ENCODE measurements at regions of chr16 and their contacts with region 1.

Region 1: DNA sequence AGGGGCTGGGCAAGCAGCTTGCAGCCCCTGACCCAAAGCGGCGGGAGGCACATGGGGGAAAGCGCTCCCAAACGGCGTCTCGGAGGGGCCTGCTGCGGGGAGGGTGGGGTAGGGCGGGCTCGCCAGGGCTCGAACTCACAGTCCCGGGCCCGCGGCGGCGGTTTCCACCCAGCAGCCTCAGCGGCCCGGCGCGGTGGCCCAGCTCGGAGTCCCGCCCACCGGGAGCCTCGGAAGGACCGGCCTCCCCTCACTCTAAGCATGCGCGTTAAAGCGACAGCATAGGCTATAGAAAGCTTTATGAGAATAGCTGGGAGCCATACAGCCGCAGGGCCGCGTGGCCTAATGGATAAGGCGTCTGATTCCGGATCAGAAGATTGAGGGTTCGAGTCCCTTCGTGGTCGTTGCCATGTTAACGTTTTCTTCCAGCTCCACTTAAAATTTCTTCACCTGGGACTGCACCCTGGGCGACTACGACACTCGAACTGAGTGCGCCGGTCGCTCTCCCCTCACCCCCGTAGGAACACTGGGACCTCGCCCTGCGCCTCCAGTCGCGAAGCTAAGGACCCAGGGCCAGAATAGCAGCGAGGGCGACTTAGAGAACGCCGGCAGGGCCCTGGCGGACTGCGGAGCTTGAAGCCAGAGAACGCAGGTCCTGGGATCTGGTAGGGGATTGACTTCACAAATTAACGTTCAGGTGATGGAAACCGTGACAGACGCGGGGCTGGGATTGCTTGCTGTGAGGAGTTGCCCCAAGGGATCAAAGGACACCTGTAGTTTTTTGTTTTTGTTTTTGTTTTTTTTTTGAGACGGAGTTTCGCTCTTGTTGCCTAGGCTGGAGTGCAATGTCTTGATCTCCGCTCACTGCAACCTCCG is 15.8 kb downstream of the ZNF213 start:
- DNase-seq: peak; percentile 98
- H3K4me3 Mint-ChIP-seq: peak overlapping the region; percentile 83
- H3K27ac Mint-ChIP-seq: peak overlapping the region; percentile 87
- H3K4me1 Mint-ChIP-seq: peaks cover 10% of the 10 kb centered on the region
- H3K27me3 Mint-ChIP-seq: no peaks in the 10 kb centered on the region
- CTCF ChIP-seq: no peak

Region 2: GRCh38 chr16:2682209-2683021 is 468.2 kb before region 1 on chr16 and contains the start of gene KCTD5:
- CTCF ChIA-PET with region 1: no interaction called
- POLR2A ChIA-PET with region 1: no interaction called
- intact Hi-C with region 1: no loop called
- DNase-seq: peak; percentile 94
- H3K4me3 Mint-ChIP-seq: peak within 1 kb of the TSS; percentile 96
- H3K27ac Mint-ChIP-seq: peak within 1 kb of the TSS; percentile 97
- H3K4me1 Mint-ChIP-seq: no peaks in the 10 kb centered on the region
- H3K27me3 Mint-ChIP-seq: no peaks in the 10 kb centered on the region
- CTCF ChIP-seq: no peak
- total RNA-seq, gene KCTD5: 49.4 and 51.6 TPM in 2 replicates

Region 3: GRCh38 chr16:3165111-3165822 is 14.7 kb after region 1 on chr16:
- CTCF ChIA-PET with region 1: interaction called, 4 read pairs
- POLR2A ChIA-PET with region 1: interaction called, 4 read pairs
- intact Hi-C with region 1: loop called (anchors 2 kb)
- DNase-seq: no peak
- H3K4me3 Mint-ChIP-seq: no peak overlapping the region
- H3K27ac Mint-ChIP-seq: no peak overlapping the region
- H3K4me1 Mint-ChIP-seq: no peaks in the 10 kb centered on the region
- H3K27me3 Mint-ChIP-seq: no peaks in the 10 kb centered on the region
- CTCF ChIP-seq: no peak

Region 4: DNA sequence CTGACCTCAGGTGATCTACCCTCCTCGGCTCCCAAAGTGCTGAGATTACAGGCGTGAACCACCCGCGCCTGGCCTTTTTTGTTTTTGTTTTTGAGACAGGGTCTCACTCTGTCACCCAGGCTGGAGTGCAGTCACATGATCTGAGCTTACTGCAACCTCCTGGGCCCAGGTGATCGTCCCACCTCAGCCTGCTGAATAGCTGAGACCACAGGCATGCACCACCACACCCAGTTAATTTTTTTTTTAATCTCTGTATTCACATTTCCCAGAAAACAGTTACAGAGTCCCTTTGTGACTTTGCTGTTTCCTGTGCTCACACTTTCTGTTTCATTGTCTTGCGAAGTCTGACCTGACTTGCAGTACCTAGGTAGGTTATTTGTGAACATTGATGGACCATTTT is 352.9 kb after region 1 on chr16:
- CTCF ChIA-PET with region 1: no interaction called
- POLR2A ChIA-PET with region 1: interaction called, 3 read pairs
- intact Hi-C with region 1: loop called (anchors 1 kb)
- DNase-seq: no peak
- H3K4me3 Mint-ChIP-seq: no peak overlapping the region
- H3K27ac Mint-ChIP-seq: no peak overlapping the region
- H3K4me1 Mint-ChIP-seq: peaks cover 4% of the 10 kb centered on the region
- H3K27me3 Mint-ChIP-seq: no peaks in the 10 kb centered on the region
- CTCF ChIP-seq: no peak